OCI-LY7 (cell line): ENCODE measurements at regions of chr3 and their contacts with region 1.

Region 1: GRCh38 chr3:107660306-107660976 is 137.7 kb downstream of the BBX start:
- DNase-seq: peak; percentile 59
- H3K4me3 ChIP-seq: no peak overlapping the region
- H3K27ac ChIP-seq: no peak overlapping the region
- H3K4me1 ChIP-seq: no peaks in the 10 kb centered on the region
- CTCF ChIP-seq: peak; percentile 93

Region 2: DNA sequence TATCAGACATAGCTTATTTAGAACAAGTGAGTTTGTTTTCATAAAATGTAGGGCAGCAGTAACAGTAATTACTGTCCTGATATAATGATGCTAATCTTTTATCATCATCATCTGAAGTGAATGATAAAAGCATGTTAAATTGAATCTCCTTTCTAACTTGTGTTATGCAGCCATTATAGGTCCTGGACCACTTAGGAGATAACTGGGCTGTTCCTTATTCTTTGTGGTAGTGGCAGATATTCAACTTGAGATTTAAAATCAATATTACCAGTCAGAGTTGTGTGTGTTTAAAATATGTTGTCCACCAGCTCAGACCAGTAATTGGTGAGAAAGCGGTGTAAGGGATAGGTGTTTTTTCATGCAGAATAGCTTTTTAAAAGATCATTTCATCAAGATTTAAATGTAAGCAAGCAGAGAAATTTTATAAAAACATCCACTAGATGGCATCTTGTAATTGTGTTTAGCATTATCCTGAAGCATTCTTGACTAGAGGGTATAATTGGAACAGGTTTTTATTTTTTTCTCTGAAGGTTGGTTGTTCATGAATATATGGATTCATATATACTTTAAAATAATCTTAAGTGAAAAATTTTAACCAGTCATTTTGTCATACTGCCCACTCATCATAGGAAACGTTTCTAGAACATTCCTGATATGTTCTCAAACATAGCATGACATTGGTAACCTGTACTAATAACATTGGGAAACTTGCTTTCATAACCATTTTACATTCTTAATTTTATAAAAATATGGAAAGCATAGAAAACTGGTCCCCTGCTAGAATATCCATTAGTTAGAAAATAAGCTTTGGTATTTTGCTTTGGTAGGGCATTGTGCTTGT is 16.2 kb after region 1 on chr3:
- CTCF ChIA-PET with region 1: interaction called, 10 read pairs
- POLR2A ChIA-PET with region 1: interaction called, 9 read pairs
- intact Hi-C with region 1: no loop called
- DNase-seq: peak; percentile 63
- H3K4me3 ChIP-seq: no peak overlapping the region
- H3K27ac ChIP-seq: no peak overlapping the region
- H3K4me1 ChIP-seq: peaks cover 26% of the 10 kb centered on the region
- CTCF ChIP-seq: peak; percentile 90